ENCODE measurements at regions of chr19 and their contacts with region 1.

Region 1: DNA sequence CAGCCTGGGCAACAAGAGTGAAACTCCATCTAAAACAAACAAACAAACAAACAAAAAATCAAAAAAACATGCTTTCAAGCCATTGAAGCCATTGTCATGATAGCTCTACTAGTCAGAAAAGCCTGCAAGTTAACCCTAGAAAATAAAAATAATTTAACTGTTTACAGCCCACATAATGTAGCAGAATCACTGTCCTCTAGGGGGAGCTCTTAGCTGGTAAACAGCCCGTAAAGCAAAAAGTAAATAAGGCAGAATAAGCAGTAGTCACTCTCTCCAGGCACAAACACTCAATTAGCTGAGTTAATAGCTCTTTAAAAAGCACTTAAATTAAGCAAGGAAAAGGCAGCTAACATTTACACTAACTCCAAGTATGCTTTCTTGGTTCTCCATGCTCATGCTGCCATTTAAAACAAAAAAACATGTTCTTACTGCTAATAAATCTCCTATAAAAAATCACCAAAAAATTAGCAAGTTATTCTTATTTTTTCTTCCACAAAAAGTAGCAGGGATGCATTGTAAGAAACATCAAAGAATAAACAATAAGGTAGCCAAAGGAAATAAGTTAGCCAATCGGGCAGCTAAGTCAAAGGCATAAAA is 11.3 kb downstream of the LILRB4 start:
- DNase-seq: peak; percentile 49 to 66
- ATAC-seq: peak; percentile 20 to 79; a peak in 3 of 6 replicates
- H3K4me3 ChIP-seq: no peak overlapping the region
- H3K27ac ChIP-seq: no peak overlapping the region
- H3K4me1 ChIP-seq: no peaks in the 10 kb centered on the region
- CTCF ChIP-seq: peak; percentile 84
- EP300 ChIP-seq: no peak
- POLR2A ChIP-seq: no peak
- RAD21 ChIP-seq: peak; percentile 49 to 70; a peak in 4 of 5 replicates

Region 2: DNA sequence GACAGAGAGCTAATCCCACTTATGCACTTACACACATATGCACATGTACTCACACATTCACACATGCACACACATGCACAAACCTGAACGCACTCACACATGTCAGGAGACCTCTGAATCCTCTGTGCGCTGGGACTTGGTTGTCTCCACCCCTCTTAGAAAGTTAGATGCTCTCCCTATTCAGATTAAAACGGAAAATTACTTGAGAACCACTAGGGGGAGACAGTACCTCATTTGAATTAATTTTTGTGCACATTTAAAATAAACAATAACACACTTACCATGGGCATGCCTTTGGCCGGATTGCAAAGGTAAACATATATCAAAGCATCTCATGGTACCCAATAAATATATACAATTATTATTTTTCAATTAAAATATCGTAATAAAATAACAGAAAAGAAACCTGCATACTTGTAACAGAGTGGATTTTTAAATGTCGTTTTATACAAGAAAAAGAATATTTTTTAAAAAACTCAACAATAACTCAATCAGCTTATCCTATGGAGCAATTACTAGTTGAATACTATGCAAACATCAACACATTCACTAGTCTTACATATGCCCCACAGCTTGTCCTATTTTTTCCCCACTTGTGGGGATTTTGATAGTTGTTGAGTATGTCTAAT is 20.8 kb before region 1 on chr19:
- CTCF ChIA-PET with region 1: interaction called, 67 read pairs
- POLR2A ChIA-PET with region 1: no interaction called
- DNase-seq: peak; percentile 52 to 67
- ATAC-seq: peak; percentile 68 to 77; a peak in 5 of 6 replicates
- H3K4me3 ChIP-seq: no peak overlapping the region
- H3K27ac ChIP-seq: no peak overlapping the region
- H3K4me1 ChIP-seq: no peaks in the 10 kb centered on the region
- CTCF ChIP-seq: peak; percentile 70
- EP300 ChIP-seq: no peak
- POLR2A ChIP-seq: no peak
- RAD21 ChIP-seq: peak; percentile 57 to 58; a peak in 4 of 5 replicates

Region 3: GRCh38 chr19:54662730-54663129 is 11.4 kb before region 1 on chr19 and contains the start of gene LILRB4:
- CTCF ChIA-PET with region 1: interaction called, 16 read pairs
- POLR2A ChIA-PET with region 1: no interaction called
- DNase-seq: no peak
- ATAC-seq: no peak
- H3K4me3 ChIP-seq: no peak within 1 kb of the TSS
- H3K27ac ChIP-seq: no peak within 1 kb of the TSS
- H3K4me1 ChIP-seq: no peaks in the 10 kb centered on the region
- CTCF ChIP-seq: no peak
- EP300 ChIP-seq: no peak
- POLR2A ChIP-seq: no peak
- RAD21 ChIP-seq: no peak
- polyA plus RNA-seq, gene LILRB4: not detected in 2 replicates

Region 4: DNA sequence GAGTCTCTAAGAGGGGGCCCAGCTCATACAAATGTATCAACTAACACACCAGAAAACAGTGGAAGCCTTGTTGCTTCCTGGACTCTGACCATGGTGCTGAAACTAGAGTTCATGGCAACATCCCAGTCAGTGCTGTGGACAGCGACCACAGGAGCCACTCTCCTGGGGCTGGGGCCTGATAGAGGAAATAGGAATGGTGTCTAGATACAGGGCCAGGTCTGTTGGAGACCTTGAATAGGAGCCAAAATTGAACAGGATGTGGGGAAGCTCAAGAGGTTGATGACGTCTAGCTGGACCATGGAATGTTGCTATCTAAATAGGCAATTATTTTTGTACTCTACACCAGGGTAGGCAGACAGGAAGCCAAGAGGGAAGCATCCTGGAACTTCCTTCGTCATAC is 10.4 kb after region 1 on chr19:
- CTCF ChIA-PET with region 1: interaction called, 28 read pairs
- POLR2A ChIA-PET with region 1: no interaction called
- DNase-seq: peak in 1 of 2 experiments; percentile 25
- ATAC-seq: peak; percentile 40 to 64; a peak in 2 of 6 replicates
- H3K4me3 ChIP-seq: no peak overlapping the region
- H3K27ac ChIP-seq: no peak overlapping the region
- H3K4me1 ChIP-seq: no peaks in the 10 kb centered on the region
- CTCF ChIP-seq: no peak
- EP300 ChIP-seq: no peak
- POLR2A ChIP-seq: no peak
- RAD21 ChIP-seq: no peak

Region 5: GRCh38 chr19:54727562-54727961 is 53.4 kb after region 1 on chr19:
- CTCF ChIA-PET with region 1: no interaction called
- POLR2A ChIA-PET with region 1: no interaction called
- DNase-seq: no peak
- ATAC-seq: no peak
- H3K4me3 ChIP-seq: no peak overlapping the region
- H3K27ac ChIP-seq: no peak overlapping the region
- H3K4me1 ChIP-seq: no peaks in the 10 kb centered on the region
- CTCF ChIP-seq: no peak
- EP300 ChIP-seq: no peak
- POLR2A ChIP-seq: no peak
- RAD21 ChIP-seq: no peak

Region 6: DNA sequence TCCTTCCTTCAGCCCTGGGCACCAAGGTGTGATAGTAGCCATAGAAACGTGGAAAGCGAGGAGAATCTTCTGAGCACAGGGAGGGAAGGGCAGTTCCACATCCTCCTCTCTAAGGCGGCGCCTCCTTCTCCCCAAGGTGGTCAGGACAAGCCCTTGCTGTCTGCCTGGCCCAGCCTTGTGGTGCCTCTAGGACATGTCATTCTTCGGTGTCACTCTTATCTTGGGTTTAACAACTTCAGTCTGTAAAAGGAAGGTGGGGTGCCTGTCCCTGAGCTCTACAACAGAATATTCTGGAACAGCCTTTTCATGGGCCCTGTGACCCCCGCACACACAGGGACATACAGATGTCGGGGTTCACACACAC is 66.0 kb after region 1 on chr19:
- CTCF ChIA-PET with region 1: no interaction called
- POLR2A ChIA-PET with region 1: no interaction called
- DNase-seq: no peak
- ATAC-seq: no peak
- H3K4me3 ChIP-seq: no peak overlapping the region
- H3K27ac ChIP-seq: no peak overlapping the region
- H3K4me1 ChIP-seq: no peaks in the 10 kb centered on the region
- CTCF ChIP-seq: no peak
- EP300 ChIP-seq: no peak
- POLR2A ChIP-seq: no peak
- RAD21 ChIP-seq: no peak

Measured in A549 (cell line).